Caco-2 (cell line): ENCODE measurements at regions of chr1 and their contacts with region 1.

Region 1: GRCh38 chr1:74197657-74198552 is at the starts of genes FPGT and LRRIQ3:
- DNase-seq: peak; percentile 87 to 91
- H3K4me3 ChIP-seq: peak within 1 kb of the TSS; percentile 48
- H3K4me3 Mint-ChIP-seq: peak within 1 kb of the TSS; percentile 82
- H3K27ac Mint-ChIP-seq: peak within 1 kb of the TSS; percentile 94
- H3K4me1 ChIP-seq: no peaks in the 10 kb centered on the region
- H3K4me1 Mint-ChIP-seq: no peaks in the 10 kb centered on the region
- H3K27me3 ChIP-seq: no peaks in the 10 kb centered on the region
- H3K27me3 Mint-ChIP-seq: no peaks in the 10 kb centered on the region
- CTCF ChIP-seq: no peak
- total RNA-seq, gene FPGT: 5.7 and 7.3 TPM in 2 replicates
- total RNA-seq, gene LRRIQ3: 0.16 and 0.23 TPM in 2 replicates

Region 2: DNA sequence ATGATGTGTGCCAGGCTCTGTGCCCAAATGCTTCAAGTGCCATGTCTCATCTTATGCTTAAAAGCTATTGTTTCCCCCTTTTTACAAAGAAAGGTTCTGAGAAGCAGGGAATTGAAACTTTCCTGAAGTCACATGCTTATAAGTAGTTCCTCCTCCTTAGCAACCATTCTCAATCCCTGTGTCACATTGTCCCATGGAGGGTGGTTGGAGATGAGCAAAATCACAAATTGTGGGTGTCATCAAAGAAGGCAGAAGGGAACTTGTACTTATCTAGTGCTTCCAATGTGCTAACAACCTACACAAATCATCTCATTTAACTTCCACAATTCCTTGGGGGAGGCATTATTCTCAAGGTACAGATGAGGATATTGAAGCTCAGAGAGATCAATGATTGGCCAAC is 485.8 kb after region 1 on chr1:
- CTCF ChIA-PET with region 1: interaction called, 10 read pairs
- POLR2A ChIA-PET with region 1: no interaction called
- intact Hi-C with region 1: no loop called
- DNase-seq: no peak
- H3K4me3 ChIP-seq: no peak overlapping the region
- H3K4me3 Mint-ChIP-seq: no peak overlapping the region
- H3K27ac Mint-ChIP-seq: no peak overlapping the region
- H3K4me1 ChIP-seq: no peaks in the 10 kb centered on the region
- H3K4me1 Mint-ChIP-seq: no peaks in the 10 kb centered on the region
- H3K27me3 ChIP-seq: no peaks in the 10 kb centered on the region
- H3K27me3 Mint-ChIP-seq: peaks cover 4% of the 10 kb centered on the region
- CTCF ChIP-seq: no peak

Region 3: DNA sequence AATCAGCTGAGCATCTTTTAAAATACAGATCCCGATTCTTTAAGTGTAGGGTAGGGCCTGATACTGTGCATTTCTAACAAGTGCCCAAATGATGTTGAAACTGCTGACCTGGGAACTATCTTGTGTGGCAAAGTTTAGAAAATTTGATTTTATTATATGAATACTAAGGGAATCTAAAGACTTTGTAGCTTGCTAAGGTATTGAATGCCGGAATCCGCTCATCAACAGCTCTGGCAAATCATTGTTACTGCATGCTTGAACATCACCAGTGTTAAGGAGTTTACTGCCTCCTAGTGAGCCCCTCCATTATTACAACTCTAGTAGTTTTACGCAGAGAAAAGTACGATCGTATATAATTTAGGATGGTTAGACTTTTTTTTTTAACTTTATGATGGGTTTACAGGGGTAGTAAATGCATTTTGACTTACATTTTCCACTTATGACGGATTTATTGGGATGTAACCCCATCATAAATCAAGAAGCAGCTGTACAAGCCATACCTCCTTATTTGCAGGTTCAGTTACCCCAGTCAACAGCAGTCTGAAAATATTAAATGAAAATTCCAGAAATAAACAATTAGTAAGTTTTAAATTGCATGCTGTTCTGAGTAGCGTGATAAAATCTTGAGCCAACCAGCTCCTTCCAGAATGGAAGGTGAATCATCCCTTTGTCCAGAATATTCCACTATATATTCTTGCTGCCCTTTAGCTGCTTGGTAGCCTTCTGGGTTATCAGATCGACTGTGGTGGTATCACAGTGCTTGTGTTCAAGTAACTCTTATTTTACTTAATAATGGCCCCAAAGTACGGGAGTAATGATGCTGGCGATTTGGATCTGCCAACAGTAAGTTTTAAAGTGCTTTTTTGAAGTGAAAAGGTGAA is 535.9 kb after region 1 on chr1:
- CTCF ChIA-PET with region 1: no interaction called
- POLR2A ChIA-PET with region 1: no interaction called
- intact Hi-C with region 1: loop called (anchors 5 kb)
- DNase-seq: peak in 1 of 2 experiments; percentile 57
- H3K4me3 ChIP-seq: peak overlapping the region; percentile 63
- H3K4me3 Mint-ChIP-seq: peak overlapping the region; percentile 83
- H3K27ac Mint-ChIP-seq: peak overlapping the region; percentile 94
- H3K4me1 ChIP-seq: peaks cover 15% of the 10 kb centered on the region; the same call in 1 of the 2 replicates
- H3K4me1 Mint-ChIP-seq: no peaks in the 10 kb centered on the region
- H3K27me3 ChIP-seq: no peaks in the 10 kb centered on the region
- H3K27me3 Mint-ChIP-seq: no peaks in the 10 kb centered on the region
- CTCF ChIP-seq: peak; percentile 51 to 57